ENCODE measurements at regions of chr11 and their contacts with region 1.

Region 1: GRCh38 chr11:69881449-69882269 is 62.4 kb upstream of the FGF3 start:
- DNase-seq: no peak
- ATAC-seq: no peak
- H3K4me3 ChIP-seq: no peak overlapping the region
- H3K27ac ChIP-seq: no peak overlapping the region
- H3K4me1 ChIP-seq: no peaks in the 10 kb centered on the region
- H3K27me3 ChIP-seq: peaks cover 0 to 45% (median 15%) of the 10 kb centered on the region in 7 donors
- CTCF ChIP-seq: no peak

Region 2: DNA sequence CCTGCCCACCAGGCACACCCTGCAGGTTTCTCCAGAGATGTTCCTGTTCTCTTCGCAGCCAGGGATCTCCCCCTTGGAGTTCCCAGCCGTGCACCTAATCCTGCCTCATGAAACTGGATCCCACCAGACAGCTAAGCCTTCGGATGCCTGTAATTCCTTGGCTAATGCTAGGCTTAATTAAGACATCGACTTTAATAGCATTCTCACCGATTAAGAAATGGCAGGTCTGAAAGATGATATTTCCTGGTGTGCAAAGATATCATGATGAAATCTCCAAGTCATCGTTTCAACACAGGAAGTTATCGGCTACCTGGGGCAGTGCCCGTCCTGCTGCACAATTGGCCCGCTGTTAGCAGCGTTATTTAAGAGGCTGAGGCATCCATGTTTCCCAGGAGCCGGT is 282.2 kb before region 1 on chr11:
- intact Hi-C with region 1: no loop called
- DNase-seq: no peak
- ATAC-seq: no peak
- H3K4me3 ChIP-seq: no peak overlapping the region
- H3K27ac ChIP-seq: no peak overlapping the region
- H3K4me1 ChIP-seq: peaks cover 0 to 3% (median 0%) of the 10 kb centered on the region in 9 donors
- H3K27me3 ChIP-seq: peaks cover 0 to 3% (median 0%) of the 10 kb centered on the region in 7 donors
- CTCF ChIP-seq: no peak

Region 3: DNA sequence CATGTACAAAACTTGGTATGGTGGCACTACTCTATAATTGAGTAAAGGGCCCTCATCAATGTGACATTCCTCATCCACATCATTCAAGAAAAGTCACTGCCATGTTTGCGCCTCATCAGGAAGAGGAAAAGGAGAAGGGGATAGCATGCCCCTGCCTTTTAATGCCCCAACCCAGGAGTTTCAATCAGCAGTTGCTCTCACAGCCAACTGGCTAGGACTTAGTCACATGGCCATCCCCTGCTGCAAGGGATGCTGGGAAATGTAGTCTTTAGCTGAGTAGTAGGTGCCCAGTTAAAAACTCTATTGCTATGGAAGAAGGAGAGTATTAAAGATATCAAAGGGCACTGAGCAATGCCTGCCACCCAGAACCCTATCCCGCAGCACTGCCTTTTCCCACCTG is 251.7 kb before region 1 on chr11:
- intact Hi-C with region 1: no loop called
- DNase-seq: no peak
- ATAC-seq: no peak
- H3K4me3 ChIP-seq: no peak overlapping the region
- H3K27ac ChIP-seq: no peak overlapping the region
- H3K4me1 ChIP-seq: peaks cover 0 to 10% (median 0%) of the 10 kb centered on the region in 9 donors
- H3K27me3 ChIP-seq: peaks cover 0 to 6% (median 0%) of the 10 kb centered on the region in 7 donors
- CTCF ChIP-seq: no peak

Region 4: GRCh38 chr11:69704508-69705253 is 177.0 kb before region 1 on chr11:
- intact Hi-C with region 1: loop called in 3 of 10 experiments (anchors 5 kb)
- DNase-seq: no peak
- ATAC-seq: peak in 5 of 8 donors; percentile 35 to 61 (median 50)
- H3K4me3 ChIP-seq: peak overlapping the region in 9 of 10 donors; percentile 0 to 38 (median 17)
- H3K27ac ChIP-seq: no peak overlapping the region
- H3K4me1 ChIP-seq: peaks cover 5 to 40% (median 26%) of the 10 kb centered on the region in 9 donors
- H3K27me3 ChIP-seq: peaks cover 24 to 92% (median 83%) of the 10 kb centered on the region in 7 donors
- CTCF ChIP-seq: peak in 8 of 9 donors; percentile 7 to 64 (median 48)

Region 5: DNA sequence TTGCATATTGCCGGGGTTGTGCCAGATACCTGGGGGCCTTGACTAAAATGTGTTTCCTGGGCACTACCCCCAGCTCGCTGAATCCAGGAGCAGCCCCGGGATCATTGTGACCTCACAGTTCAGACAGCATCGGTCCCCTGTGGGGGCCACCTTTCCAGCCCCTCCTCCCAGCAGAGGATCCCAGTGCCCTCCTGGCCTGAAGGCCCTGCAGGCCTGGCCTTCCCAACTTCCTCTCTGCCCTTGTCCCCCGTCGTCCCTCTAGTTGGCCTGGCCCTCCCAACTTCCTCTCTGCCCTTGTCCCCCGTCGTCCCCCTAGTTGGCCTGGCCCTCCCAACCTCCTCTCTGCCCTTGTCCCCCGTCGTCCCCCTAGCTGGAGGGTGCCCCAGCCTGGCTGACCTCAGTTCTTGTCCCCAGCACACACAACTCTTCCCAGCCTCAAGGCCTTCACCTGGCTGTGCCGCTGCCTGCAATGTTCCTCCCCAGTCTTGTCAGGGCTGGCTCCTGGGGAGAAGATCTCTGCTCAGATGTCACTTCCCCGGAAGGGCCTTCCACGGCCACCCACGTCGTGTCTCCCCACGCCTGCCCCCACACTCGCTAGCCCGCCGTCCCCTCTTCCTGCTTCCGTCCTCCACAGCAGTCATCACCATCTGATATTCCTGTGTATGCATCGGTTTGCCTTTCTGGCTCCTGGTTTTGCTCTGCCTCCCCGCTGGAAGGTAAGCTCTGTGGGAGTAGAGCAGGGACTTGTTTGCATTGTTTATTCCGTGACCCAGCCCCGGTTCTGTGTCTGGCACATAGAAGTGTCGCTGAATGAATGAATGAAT is 183.9 kb after region 1 on chr11:
- intact Hi-C with region 1: no loop called
- DNase-seq: no peak
- ATAC-seq: no peak
- H3K4me3 ChIP-seq: no peak overlapping the region
- H3K27ac ChIP-seq: no peak overlapping the region
- H3K4me1 ChIP-seq: peaks cover 0 to 8% (median 0%) of the 10 kb centered on the region in 9 donors
- H3K27me3 ChIP-seq: peaks cover 0 to 47% (median 31%) of the 10 kb centered on the region in 7 donors
- CTCF ChIP-seq: no peak

Region 6: GRCh38 chr11:70202898-70203748 is 321.5 kb after region 1 on chr11 and contains the start of gene FADD:
- intact Hi-C with region 1: no loop called
- DNase-seq: peak; percentile 90
- ATAC-seq: peak; percentile 84 to 93 (median 89)
- H3K4me3 ChIP-seq: peak within 1 kb of the TSS; percentile 62 to 96 (median 94)
- H3K27ac ChIP-seq: peak within 1 kb of the TSS in 9 of 10 donors; percentile 88 to 98 (median 94)
- H3K4me1 ChIP-seq: peaks cover 8 to 40% (median 23%) of the 10 kb centered on the region in 9 donors
- H3K27me3 ChIP-seq: no peaks in the 10 kb centered on the region
- CTCF ChIP-seq: no peak
- total RNA-seq, gene FADD: 6.7 to 12.7 (median 9.0) TPM